Heart right ventricle (tissue), 16 donors: ENCODE measurements at regions of chr2 and their contacts with region 1.

Region 1: DNA sequence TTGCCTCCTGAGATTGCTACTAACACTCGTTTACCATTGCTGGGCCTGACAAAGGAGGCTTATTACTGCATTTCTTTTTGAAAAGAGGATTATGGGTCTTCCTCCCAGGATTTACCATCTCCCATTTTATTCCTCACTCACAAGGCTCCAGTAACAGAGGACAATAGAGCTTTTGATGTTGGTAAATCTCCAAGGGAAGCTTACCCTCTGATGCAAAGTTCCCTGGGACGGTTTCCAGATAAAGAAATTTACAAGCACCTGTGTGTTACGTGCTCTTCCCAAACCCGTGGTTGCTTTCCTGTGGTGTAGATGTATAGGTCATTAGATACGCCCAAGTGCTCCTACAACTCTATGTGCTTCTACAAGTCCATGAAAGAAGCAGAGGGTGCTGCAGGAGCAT is 17.1 kb downstream of the VSNL1 start:
- DNase-seq: no peak
- ATAC-seq: no peak
- H3K4me3 ChIP-seq: no peak overlapping the region
- H3K27ac ChIP-seq: no peak overlapping the region
- H3K4me1 ChIP-seq: peaks cover 0 to 7% (median 0%) of the 10 kb centered on the region in 9 donors
- H3K27me3 ChIP-seq: no peaks in the 10 kb centered on the region
- CTCF ChIP-seq: no peak

Region 2: GRCh38 chr2:17495590-17495989 is 62.0 kb before region 1 on chr2:
- intact Hi-C with region 1: loop called in 1 of 10 experiments (anchors 10 kb)
- DNase-seq: no peak
- ATAC-seq: no peak
- H3K4me3 ChIP-seq: no peak overlapping the region
- H3K27ac ChIP-seq: no peak overlapping the region
- H3K4me1 ChIP-seq: no peaks in the 10 kb centered on the region
- H3K27me3 ChIP-seq: no peaks in the 10 kb centered on the region
- CTCF ChIP-seq: no peak